B cell (primary cell): ENCODE measurements at regions of chr12 and their contacts with region 1.

Region 1: DNA sequence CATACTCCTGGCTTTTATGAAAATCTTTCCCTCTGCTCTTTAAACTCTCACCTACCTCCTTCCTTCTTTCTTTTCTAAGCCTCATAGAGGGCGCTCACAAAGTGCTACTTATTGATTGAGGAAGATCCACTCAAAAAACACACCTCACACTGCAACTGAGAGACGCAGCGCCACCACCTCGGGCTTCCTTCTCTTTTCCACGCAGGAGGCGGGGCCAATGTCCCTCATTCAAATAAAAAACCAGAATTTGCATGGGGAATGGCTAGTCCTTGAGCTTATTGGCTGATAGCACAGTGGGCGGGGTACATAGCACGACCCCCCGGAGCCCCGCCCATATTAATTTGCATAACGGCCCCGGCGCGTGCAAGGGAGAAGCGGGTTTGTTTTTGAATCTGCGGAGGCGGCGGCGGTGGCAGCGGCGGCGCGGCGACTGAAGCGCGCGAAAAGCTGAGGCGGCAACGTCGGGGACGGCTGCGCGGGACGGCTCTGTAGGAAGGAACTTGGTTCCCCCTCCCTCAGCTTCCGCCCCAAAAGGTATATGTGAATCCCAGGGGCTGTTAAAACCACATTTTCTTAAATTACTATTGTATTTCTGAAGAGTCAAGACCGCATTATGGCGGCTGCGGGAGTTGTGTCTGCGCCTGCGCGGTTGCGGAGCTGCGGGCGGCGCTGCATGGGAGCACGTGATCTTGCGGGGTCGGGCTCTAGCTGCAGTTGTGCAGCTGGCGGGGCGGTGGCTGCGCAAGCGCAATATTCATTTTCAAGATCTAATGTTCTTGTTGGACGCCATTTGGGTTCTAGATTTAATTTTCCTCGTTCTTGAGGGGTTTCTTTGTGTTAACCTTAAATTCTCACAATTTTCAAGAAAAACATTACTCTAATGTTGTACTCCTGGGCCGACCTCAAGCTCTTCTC is at the start of gene ATF7IP:
- DNase-seq: peak; percentile 99
- ATAC-seq: peak; percentile 83
- H3K4me3 ChIP-seq: peak within 1 kb of the TSS; percentile 71 to 97 (median 82)
- H3K4me3 Mint-ChIP-seq: peak within 1 kb of the TSS; percentile 84
- H3K27ac ChIP-seq: peak within 1 kb of the TSS; percentile 98 to 99
- H3K27ac Mint-ChIP-seq: peak within 1 kb of the TSS; percentile 95
- H3K4me1 ChIP-seq: peaks cover 45 to 46% of the 10 kb centered on the region in 2 donors
- H3K4me1 Mint-ChIP-seq: peaks cover 40% of the 10 kb centered on the region
- H3K27me3 ChIP-seq: no peaks in the 10 kb centered on the region
- H3K27me3 Mint-ChIP-seq: no peaks in the 10 kb centered on the region
- CTCF ChIP-seq: peak; percentile 49
- total RNA-seq, gene ATF7IP: 201 and 208 TPM in 2 replicates

Region 2: DNA sequence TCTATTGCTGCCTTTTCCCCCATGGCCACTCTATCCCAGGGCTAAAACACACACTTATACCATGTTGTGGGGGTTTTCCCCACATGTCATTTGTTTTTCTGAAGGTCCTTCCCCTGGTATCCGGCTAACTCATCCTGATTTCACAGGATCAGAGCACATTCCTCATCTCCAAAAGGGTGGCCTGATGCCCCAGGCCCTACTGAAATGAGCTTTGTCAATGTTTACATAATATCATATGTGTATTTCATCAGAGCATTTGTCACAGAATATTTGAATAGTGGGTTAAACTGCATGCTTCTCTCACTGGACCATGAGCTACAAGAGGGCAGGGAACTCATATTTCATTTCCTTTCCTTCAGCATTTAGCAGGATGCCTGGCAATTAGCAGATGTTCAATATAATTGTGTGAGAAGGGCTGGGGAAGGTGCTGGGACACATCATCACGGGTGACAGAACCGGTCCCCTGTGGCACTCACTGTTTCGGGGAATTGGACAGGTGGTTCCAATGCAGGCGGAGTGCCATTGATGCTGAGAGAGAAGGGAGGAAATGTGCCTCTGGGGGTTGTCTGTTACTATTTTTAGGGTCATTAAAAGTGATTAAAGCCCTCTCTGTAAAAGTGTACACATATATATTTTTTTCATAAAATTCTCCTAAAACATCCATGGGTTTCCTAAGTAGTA is 1142.2 kb before region 1 on chr12:
- CTCF ChIA-PET with region 1: no interaction called
- POLR2A ChIA-PET with region 1: no interaction called
- intact Hi-C with region 1: no loop called
- DNase-seq: no peak
- ATAC-seq: no peak
- H3K4me3 ChIP-seq: no peak overlapping the region
- H3K4me3 Mint-ChIP-seq: no peak overlapping the region
- H3K27ac ChIP-seq: no peak overlapping the region
- H3K27ac Mint-ChIP-seq: no peak overlapping the region
- H3K4me1 ChIP-seq: no peaks in the 10 kb centered on the region
- H3K4me1 Mint-ChIP-seq: no peaks in the 10 kb centered on the region
- H3K27me3 ChIP-seq: no peaks in the 10 kb centered on the region
- H3K27me3 Mint-ChIP-seq: peaks cover 49% of the 10 kb centered on the region
- CTCF ChIP-seq: no peak

Region 3: DNA sequence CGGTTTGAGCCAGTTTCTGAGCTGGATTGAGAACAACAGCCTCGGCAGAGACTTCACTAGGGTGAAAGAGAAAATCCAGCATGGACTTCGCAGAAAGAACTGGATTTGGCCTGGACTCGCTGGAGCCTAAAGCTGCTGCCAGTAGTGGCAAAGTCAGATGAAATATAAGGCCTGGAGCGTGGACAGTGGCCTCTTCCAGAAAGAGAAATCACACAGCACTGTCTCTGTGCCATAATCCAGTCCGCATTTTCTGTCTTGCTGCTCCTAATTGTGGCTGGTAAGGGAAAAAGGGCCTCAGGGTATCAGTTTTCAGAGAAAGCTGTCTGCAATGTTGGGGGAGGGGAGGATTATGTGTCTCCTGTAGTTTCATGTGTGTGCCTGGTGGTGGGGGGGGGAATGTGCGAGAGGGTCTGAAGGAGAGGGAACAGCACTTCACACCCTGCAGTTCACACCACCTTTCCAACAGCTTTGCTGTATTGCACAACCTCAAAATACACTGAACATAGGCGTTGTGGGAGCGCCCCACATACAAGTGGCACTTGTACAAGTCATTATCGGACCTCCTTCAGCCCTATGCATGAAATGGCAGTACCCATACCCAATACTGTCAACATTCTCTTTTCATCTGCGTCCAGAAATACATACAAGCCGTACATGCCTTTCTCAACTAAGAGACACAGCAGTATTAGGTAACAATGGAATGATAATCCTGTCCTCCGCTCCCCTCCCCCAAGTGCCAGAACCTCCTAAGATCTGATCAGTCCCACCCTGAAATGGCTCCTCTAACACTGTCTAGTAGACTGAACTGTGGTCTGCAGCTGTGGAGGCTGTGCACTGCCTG is 107.6 kb before region 1 on chr12:
- CTCF ChIA-PET with region 1: interaction called, 33 read pairs
- POLR2A ChIA-PET with region 1: interaction called, 34 read pairs
- intact Hi-C with region 1: loop called (anchors 1 kb)
- DNase-seq: peak; percentile 81
- ATAC-seq: peak; percentile 64
- H3K4me3 ChIP-seq: peak overlapping the region in 3 of 5 experiments; percentile 1 to 52 (median 8)
- H3K4me3 Mint-ChIP-seq: peak overlapping the region; percentile 79
- H3K27ac ChIP-seq: peak overlapping the region; percentile 81 to 90
- H3K27ac Mint-ChIP-seq: peak overlapping the region; percentile 98
- H3K4me1 ChIP-seq: peaks cover 41 to 60% of the 10 kb centered on the region in 2 donors
- H3K4me1 Mint-ChIP-seq: peaks cover 62% of the 10 kb centered on the region
- H3K27me3 ChIP-seq: no peaks in the 10 kb centered on the region
- H3K27me3 Mint-ChIP-seq: no peaks in the 10 kb centered on the region
- CTCF ChIP-seq: no peak

Region 4: GRCh38 chr12:14284184-14284722 is 81.3 kb before region 1 on chr12:
- CTCF ChIA-PET with region 1: interaction called, 16 read pairs
- POLR2A ChIA-PET with region 1: interaction called, 10 read pairs
- intact Hi-C with region 1: loop called (anchors 1 kb)
- DNase-seq: peak; percentile 51
- ATAC-seq: peak; percentile 40
- H3K4me3 ChIP-seq: peak overlapping the region in 1 of 5 experiments; percentile 25
- H3K4me3 Mint-ChIP-seq: peak overlapping the region; percentile 79
- H3K27ac ChIP-seq: peak overlapping the region; percentile 92 to 95
- H3K27ac Mint-ChIP-seq: peak overlapping the region; percentile 97
- H3K4me1 ChIP-seq: peaks cover 39 to 64% of the 10 kb centered on the region in 2 donors
- H3K4me1 Mint-ChIP-seq: peaks cover 48% of the 10 kb centered on the region
- H3K27me3 ChIP-seq: no peaks in the 10 kb centered on the region
- H3K27me3 Mint-ChIP-seq: no peaks in the 10 kb centered on the region
- CTCF ChIP-seq: no peak

Region 5: DNA sequence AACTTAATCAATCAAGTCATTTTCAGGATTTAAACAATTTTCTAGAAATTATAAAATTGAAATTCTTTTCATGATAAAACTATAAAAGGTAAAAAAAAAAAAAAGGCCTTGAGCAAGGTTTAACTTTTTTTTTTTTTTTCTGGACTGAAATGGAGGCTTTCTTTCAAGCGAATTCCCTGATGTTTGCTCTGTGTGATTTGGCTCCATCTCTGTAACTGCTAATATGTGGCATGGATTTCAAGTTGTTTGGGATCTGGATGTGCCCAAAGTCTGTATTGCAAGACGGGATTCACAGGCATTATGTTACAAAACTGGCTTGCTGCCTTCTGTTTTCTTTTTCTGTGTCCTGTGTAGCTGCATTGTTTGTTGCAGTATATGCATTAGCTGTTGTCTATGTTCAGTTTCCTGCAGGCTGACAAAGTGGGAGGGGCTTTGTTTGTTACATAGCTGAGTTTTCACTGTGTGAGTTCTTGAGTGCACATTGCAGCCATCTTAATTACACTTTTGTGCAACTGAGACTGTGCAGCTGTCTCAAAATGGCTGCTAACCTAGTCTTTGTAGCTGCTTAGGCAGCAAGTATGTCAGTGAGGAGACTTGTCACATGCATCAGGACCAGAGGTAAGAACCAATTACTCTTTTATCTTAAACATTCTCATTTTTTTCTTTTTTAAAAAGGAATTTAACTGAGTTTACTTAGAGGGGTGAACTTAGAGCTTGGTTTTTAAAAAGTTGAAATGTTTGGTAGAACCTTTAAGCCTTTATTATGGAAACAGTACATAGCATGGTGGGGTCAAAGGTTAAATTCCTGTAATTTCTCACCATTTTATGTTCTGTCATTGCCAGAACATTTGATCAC is 19.5 kb after region 1 on chr12:
- CTCF ChIA-PET with region 1: interaction called, 18 read pairs
- POLR2A ChIA-PET with region 1: interaction called, 6 read pairs
- intact Hi-C with region 1: no loop called
- DNase-seq: peak; percentile 71
- ATAC-seq: peak; percentile 73
- H3K4me3 ChIP-seq: peak overlapping the region in 2 of 5 experiments; percentile 15 to 34
- H3K4me3 Mint-ChIP-seq: peak overlapping the region; percentile 60
- H3K27ac ChIP-seq: peak overlapping the region; percentile 21 to 54
- H3K27ac Mint-ChIP-seq: peak overlapping the region; percentile 82
- H3K4me1 ChIP-seq: peaks cover 29 to 37% of the 10 kb centered on the region in 2 donors
- H3K4me1 Mint-ChIP-seq: peaks cover 50% of the 10 kb centered on the region
- H3K27me3 ChIP-seq: no peaks in the 10 kb centered on the region
- H3K27me3 Mint-ChIP-seq: no peaks in the 10 kb centered on the region
- CTCF ChIP-seq: no peak

Region 6: GRCh38 chr12:14417715-14418114 is 52.2 kb after region 1 on chr12:
- CTCF ChIA-PET with region 1: interaction called, 9 read pairs
- POLR2A ChIA-PET with region 1: no interaction called
- intact Hi-C with region 1: loop called (anchors 1 kb)
- DNase-seq: peak; percentile 67
- ATAC-seq: peak; percentile 48
- H3K4me3 ChIP-seq: no peak overlapping the region
- H3K4me3 Mint-ChIP-seq: peak overlapping the region; percentile 75
- H3K27ac ChIP-seq: no peak overlapping the region
- H3K27ac Mint-ChIP-seq: peak overlapping the region; percentile 62
- H3K4me1 ChIP-seq: peaks cover 21 to 42% of the 10 kb centered on the region in 2 donors
- H3K4me1 Mint-ChIP-seq: peaks cover 53% of the 10 kb centered on the region
- H3K27me3 ChIP-seq: no peaks in the 10 kb centered on the region
- H3K27me3 Mint-ChIP-seq: no peaks in the 10 kb centered on the region
- CTCF ChIP-seq: no peak

Region 7: DNA sequence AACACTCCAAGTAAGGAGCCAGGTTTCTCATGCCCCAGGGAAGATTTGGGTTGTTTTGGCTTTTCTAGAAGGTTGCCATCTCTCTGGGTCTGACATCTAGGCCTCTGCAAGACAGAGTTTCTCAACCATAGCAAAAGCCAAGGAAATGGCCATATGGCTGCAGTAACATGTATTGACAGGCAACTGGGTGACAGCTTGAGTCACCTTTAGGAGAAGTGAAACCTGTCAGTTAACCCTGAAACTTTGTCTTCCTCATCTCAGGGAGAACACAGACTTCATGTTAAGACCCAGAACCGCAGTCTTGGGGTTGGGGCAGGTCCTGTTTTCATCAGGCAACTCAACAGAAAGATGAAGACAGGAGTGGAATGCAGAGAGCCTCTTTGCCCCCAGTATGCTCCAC is 248.2 kb after region 1 on chr12:
- CTCF ChIA-PET with region 1: interaction called, 5 read pairs
- POLR2A ChIA-PET with region 1: interaction called, 4 read pairs
- intact Hi-C with region 1: loop called (anchors 2 kb)
- DNase-seq: peak; percentile 88
- ATAC-seq: peak; percentile 82
- H3K4me3 ChIP-seq: peak overlapping the region in 3 of 5 experiments; percentile 23 to 60 (median 54)
- H3K4me3 Mint-ChIP-seq: peak overlapping the region; percentile 80
- H3K27ac ChIP-seq: peak overlapping the region; percentile 73 to 81
- H3K27ac Mint-ChIP-seq: peak overlapping the region; percentile 92
- H3K4me1 ChIP-seq: peaks cover 28 to 36% of the 10 kb centered on the region in 2 donors
- H3K4me1 Mint-ChIP-seq: peaks cover 34% of the 10 kb centered on the region
- H3K27me3 ChIP-seq: no peaks in the 10 kb centered on the region
- H3K27me3 Mint-ChIP-seq: no peaks in the 10 kb centered on the region
- CTCF ChIP-seq: no peak